Natural killer cell (primary cell): ENCODE measurements at regions of chr1 and their contacts with region 1.

Region 1: DNA sequence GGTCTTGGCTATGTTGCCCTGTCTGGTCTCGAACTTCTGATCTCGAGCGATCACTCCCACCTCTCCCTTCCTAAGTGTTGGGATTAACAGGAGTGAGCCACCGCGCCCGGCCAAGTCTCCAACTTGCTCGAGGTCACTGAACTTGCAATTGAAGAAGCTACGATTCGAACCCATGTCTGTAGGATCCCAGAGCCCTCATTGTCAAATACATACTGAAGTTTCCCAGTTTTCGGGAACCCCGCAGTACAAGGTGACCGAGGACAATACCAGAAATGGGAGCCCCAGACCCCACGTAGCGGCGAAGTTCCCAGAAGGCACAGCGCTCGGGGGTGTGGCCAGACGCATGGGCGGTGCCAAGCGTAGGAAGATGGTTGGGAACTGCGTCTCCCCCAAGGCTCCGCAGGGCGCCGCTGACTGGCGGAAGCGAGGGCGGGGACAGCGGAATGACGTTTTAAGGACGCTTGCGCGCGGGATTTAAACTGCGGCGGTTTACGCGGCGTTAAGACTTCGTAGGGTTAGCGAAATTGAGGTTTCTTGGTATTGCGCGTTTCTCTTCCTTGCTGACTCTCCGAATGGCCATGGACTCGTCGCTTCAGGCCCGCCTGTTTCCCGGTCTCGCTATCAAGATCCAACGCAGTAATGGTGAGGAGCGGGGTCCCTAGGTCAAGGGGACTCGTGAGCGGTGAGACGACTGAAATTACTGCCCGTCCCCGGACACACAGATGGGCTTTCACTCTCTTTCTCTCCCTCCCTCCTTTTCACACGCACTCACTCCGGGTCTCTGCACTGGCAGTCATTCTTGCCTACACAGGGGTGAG is at the start of gene KIF2C:
- DNase-seq: peak; percentile 95 to 99
- ATAC-seq: peak; percentile 100
- H3K4me3 ChIP-seq: peak within 1 kb of the TSS; percentile 60
- H3K4me3 Mint-ChIP-seq: peak within 1 kb of the TSS; percentile 91
- H3K27ac ChIP-seq: peak within 1 kb of the TSS; percentile 81
- H3K27ac Mint-ChIP-seq: peak within 1 kb of the TSS; percentile 90 to 94
- H3K4me1 ChIP-seq: peaks cover 7% of the 10 kb centered on the region
- H3K4me1 Mint-ChIP-seq: peaks cover 12 to 18% of the 10 kb centered on the region in 2 donors
- H3K27me3 ChIP-seq: no peaks in the 10 kb centered on the region
- H3K27me3 Mint-ChIP-seq: no peaks in the 10 kb centered on the region
- CTCF ChIP-seq: no peak
- total RNA-seq, gene KIF2C: 0.59 to 1.3 (median 0.93) TPM

Region 2: GRCh38 chr1:44775078-44775929 is 35.7 kb after region 1 on chr1 and contains the start of gene RPS8:
- intact Hi-C with region 1: loop called (anchors 2 kb)
- DNase-seq: peak; percentile 84 to 96
- ATAC-seq: peak; percentile 83 to 89 (median 86)
- H3K4me3 ChIP-seq: peak within 1 kb of the TSS; percentile 65
- H3K4me3 Mint-ChIP-seq: peak within 1 kb of the TSS; percentile 99
- H3K27ac ChIP-seq: peak within 1 kb of the TSS; percentile 85
- H3K27ac Mint-ChIP-seq: peak within 1 kb of the TSS; percentile 92 to 97
- H3K4me1 ChIP-seq: peaks cover 26% of the 10 kb centered on the region
- H3K4me1 Mint-ChIP-seq: peaks cover 30 to 36% of the 10 kb centered on the region in 2 donors
- H3K27me3 ChIP-seq: no peaks in the 10 kb centered on the region
- H3K27me3 Mint-ChIP-seq: no peaks in the 10 kb centered on the region
- CTCF ChIP-seq: no peak
- total RNA-seq, gene RPS8: 848 to 1,092 (median 1,009) TPM